ENCODE measurements at regions of chr7 and their contacts with region 1.

Region 1: DNA sequence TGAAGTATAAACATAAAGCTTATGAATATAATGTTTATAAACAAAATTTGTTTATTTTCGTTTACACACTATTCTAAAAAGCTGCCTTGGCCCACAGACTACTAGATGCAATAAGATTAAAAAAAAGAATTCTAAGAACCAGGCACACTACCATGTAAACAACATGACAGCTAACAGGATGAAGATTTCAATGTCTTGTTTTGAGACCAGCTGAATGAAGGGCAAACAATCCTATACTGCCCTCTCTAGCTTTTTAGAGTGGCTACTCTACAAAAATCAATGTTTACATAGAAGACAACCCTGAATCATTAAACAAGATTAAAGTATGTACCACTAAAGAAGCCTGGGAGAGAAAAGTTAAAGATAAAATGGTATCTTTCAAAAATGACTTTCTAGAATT is 38.6 kb downstream of the SLC25A40 start:
- DNase-seq: no peak
- ATAC-seq: no peak
- H3K4me3 ChIP-seq: no peak overlapping the region
- H3K4me3 Mint-ChIP-seq: no peak overlapping the region
- H3K27ac ChIP-seq: no peak overlapping the region
- H3K27ac Mint-ChIP-seq: no peak overlapping the region
- H3K4me1 ChIP-seq: no peaks in the 10 kb centered on the region
- H3K4me1 Mint-ChIP-seq: no peaks in the 10 kb centered on the region
- H3K27me3 ChIP-seq: no peaks in the 10 kb centered on the region
- H3K27me3 Mint-ChIP-seq: no peaks in the 10 kb centered on the region
- CTCF ChIP-seq: no peak

Region 2: GRCh38 chr7:87806150-87806549 is 31.4 kb before region 1 on chr7:
- CTCF ChIA-PET with region 1: no interaction called
- POLR2A ChIA-PET with region 1: no interaction called
- intact Hi-C with region 1: loop called in 1 of 2 experiments (anchors 5 kb)
- DNase-seq: no peak
- ATAC-seq: no peak
- H3K4me3 ChIP-seq: no peak overlapping the region
- H3K4me3 Mint-ChIP-seq: no peak overlapping the region
- H3K27ac ChIP-seq: no peak overlapping the region
- H3K27ac Mint-ChIP-seq: no peak overlapping the region
- H3K4me1 ChIP-seq: no peaks in the 10 kb centered on the region
- H3K4me1 Mint-ChIP-seq: no peaks in the 10 kb centered on the region
- H3K27me3 ChIP-seq: no peaks in the 10 kb centered on the region
- H3K27me3 Mint-ChIP-seq: no peaks in the 10 kb centered on the region
- CTCF ChIP-seq: no peak

Region 3: GRCh38 chr7:88140947-88141346 is 303.4 kb after region 1 on chr7:
- CTCF ChIA-PET with region 1: no interaction called
- POLR2A ChIA-PET with region 1: no interaction called
- intact Hi-C with region 1: no loop called
- DNase-seq: no peak
- ATAC-seq: no peak
- H3K4me3 ChIP-seq: no peak overlapping the region
- H3K4me3 Mint-ChIP-seq: no peak overlapping the region
- H3K27ac ChIP-seq: no peak overlapping the region
- H3K27ac Mint-ChIP-seq: no peak overlapping the region
- H3K4me1 ChIP-seq: no peaks in the 10 kb centered on the region
- H3K4me1 Mint-ChIP-seq: no peaks in the 10 kb centered on the region
- H3K27me3 ChIP-seq: no peaks in the 10 kb centered on the region
- H3K27me3 Mint-ChIP-seq: no peaks in the 10 kb centered on the region
- CTCF ChIP-seq: no peak